BJ (cell line): ENCODE measurements at regions of chr3 and their contacts with region 1.

Region 1: GRCh38 chr3:70856414-70857162 is 544.1 kb upstream of the MDFIC2 start:
- DNase-seq: no peak
- H3K4me3 ChIP-seq: no peak overlapping the region
- H3K27me3 ChIP-seq: no peaks in the 10 kb centered on the region
- CTCF ChIP-seq: no peak

Region 2: DNA sequence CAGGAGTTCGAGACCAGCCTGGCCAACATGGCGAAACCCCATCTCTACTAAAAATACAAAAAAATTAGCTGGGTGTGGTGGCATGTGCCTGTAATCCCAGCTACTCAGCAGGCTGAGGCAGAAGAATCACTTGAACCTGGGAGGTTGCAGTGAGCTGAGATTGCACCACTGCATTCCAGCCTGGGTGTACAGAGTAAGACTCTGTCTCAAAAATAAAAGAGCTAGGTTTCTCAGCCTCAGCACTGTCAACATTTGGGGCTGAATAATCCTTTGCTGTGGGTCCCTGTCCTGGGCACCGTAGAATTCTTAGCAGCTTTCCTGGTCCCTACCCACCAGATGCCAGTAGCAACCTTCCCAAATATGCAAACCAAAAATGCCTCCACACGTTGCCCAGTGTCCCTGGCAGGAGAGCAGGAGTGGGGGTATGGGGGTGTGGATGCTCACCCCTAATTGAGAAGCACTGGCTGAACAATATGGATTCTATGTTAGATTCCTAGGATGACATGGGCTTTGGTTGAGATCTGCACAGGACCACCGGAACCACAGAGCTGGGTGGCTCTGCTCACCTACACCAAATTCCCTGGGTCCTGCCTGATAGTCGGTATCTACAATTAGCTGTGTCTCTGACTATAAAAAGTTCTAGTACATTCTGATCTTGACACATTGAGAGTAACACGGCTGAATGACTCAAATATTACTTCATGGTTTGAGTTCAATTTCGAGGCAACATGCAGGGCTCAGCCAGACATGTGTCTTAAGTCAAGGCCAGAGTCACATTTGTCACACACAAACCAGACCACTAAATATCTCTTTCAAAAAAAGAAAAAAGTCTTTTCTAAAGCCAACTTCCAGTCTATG is 32.8 kb after region 1 on chr3:
- CTCF ChIA-PET with region 1: no interaction called
- POLR2A ChIA-PET with region 1: interaction called, 14 read pairs
- DNase-seq: no peak
- H3K4me3 ChIP-seq: no peak overlapping the region
- H3K27me3 ChIP-seq: no peaks in the 10 kb centered on the region
- CTCF ChIP-seq: no peak

Region 3: GRCh38 chr3:71090207-71090606 is 233.6 kb after region 1 on chr3:
- CTCF ChIA-PET with region 1: no interaction called
- POLR2A ChIA-PET with region 1: no interaction called
- DNase-seq: no peak
- H3K4me3 ChIP-seq: no peak overlapping the region
- H3K27me3 ChIP-seq: no peaks in the 10 kb centered on the region
- CTCF ChIP-seq: no peak